PC-9 (cell line): ENCODE measurements at regions of chr20 and their contacts with region 1.

Region 1: DNA sequence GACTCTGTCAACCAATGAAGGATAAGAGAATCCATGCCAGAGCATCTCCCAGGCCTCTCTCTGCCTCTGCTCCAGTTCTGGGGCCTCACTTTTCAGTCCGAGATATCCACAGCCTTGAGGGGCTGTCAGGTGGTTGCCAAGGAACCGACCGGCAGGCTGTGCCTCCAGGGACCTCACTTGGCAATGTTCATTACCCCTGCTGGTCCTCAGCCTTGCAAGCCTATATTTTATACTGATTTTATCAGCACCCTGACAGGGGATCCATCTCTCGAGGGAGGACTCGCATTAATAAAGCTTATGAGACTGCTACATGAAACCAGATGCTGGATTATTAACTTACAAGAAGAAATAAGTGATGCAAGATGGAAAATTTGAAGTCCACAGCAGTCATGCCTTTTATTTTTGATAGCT is 39.9 kb downstream of the TMC2 start:
- DNase-seq: no peak
- H3K4me3 ChIP-seq: no peak overlapping the region
- H3K27ac ChIP-seq: no peak overlapping the region
- H3K4me1 ChIP-seq: no peaks in the 10 kb centered on the region
- H3K27me3 ChIP-seq: peaks cover 44% of the 10 kb centered on the region
- CTCF ChIP-seq: no peak

Region 2: GRCh38 chr20:1888796-1889463 is 687.4 kb before region 1 on chr20:
- CTCF ChIA-PET with region 1: no interaction called
- POLR2A ChIA-PET with region 1: interaction called, 11 read pairs
- intact Hi-C with region 1: no loop called
- DNase-seq: peak in 1 of 2 experiments; percentile 57
- H3K4me3 ChIP-seq: no peak overlapping the region
- H3K27ac ChIP-seq: no peak overlapping the region
- H3K4me1 ChIP-seq: peaks cover 8% of the 10 kb centered on the region
- H3K27me3 ChIP-seq: no peaks in the 10 kb centered on the region
- CTCF ChIP-seq: no peak

Region 3: DNA sequence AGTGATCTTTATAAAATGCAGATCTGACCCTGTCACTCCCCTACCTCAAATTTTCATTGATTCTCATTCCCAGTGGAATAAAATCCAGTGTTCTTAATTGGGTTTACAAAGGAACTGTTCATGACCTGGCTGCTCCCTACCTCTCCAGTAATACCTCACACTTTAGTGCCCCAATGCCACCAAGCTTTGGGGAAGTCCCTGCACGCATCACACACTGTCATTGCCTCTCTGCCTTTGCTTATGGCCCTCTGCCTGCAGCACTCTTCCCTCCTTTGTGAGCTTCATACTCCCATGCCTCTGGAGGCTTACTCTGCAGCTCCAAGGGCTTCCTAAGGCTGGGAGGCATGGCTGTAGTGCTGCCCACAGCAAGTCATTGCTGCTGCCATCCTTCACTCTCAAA is 17.4 kb after region 1 on chr20:
- CTCF ChIA-PET with region 1: no interaction called
- POLR2A ChIA-PET with region 1: no interaction called
- intact Hi-C with region 1: no loop called
- DNase-seq: no peak
- H3K4me3 ChIP-seq: no peak overlapping the region
- H3K27ac ChIP-seq: no peak overlapping the region
- H3K4me1 ChIP-seq: no peaks in the 10 kb centered on the region
- H3K27me3 ChIP-seq: peaks cover 4% of the 10 kb centered on the region; the same call in 1 of the 2 replicates
- CTCF ChIP-seq: no peak

Region 4: GRCh38 chr20:2631228-2631627 is 54.9 kb after region 1 on chr20:
- CTCF ChIA-PET with region 1: no interaction called
- POLR2A ChIA-PET with region 1: no interaction called
- intact Hi-C with region 1: no loop called
- DNase-seq: no peak
- H3K4me3 ChIP-seq: no peak overlapping the region
- H3K27ac ChIP-seq: no peak overlapping the region
- H3K4me1 ChIP-seq: peaks cover 7% of the 10 kb centered on the region
- H3K27me3 ChIP-seq: peaks cover 33% of the 10 kb centered on the region
- CTCF ChIP-seq: peak; percentile 36; the same call in 1 of the 2 replicates